IMR-90 (cell line): ENCODE measurements at regions of chr9 and their contacts with region 1.

Region 1: GRCh38 chr9:27033823-27034403 is 28.4 kb upstream of the LRRC19 start:
- DNase-seq: peak; percentile 53
- ATAC-seq: peak; percentile 86
- H3K4me3 ChIP-seq: no peak overlapping the region
- H3K27ac ChIP-seq: no peak overlapping the region
- H3K4me1 ChIP-seq: no peaks in the 10 kb centered on the region
- H3K27me3 ChIP-seq: no peaks in the 10 kb centered on the region
- CTCF ChIP-seq: peak; percentile 84
- POLR2A ChIP-seq: no peak
- RAD21 ChIP-seq: peak; percentile 91

Region 2: GRCh38 chr9:26744191-26744965 is 289.5 kb before region 1 on chr9:
- CTCF ChIA-PET with region 1: no interaction called
- POLR2A ChIA-PET with region 1: no interaction called
- dilution Hi-C with region 1: no loop called
- in situ Hi-C with region 1: no loop called
- intact Hi-C with region 1: loop called (anchors 10 kb)
- DNase-seq: peak; percentile 38
- ATAC-seq: no peak
- H3K4me3 ChIP-seq: no peak overlapping the region
- H3K27ac ChIP-seq: no peak overlapping the region
- H3K4me1 ChIP-seq: no peaks in the 10 kb centered on the region
- H3K27me3 ChIP-seq: no peaks in the 10 kb centered on the region; the same call in 1 of the 2 replicates
- CTCF ChIP-seq: peak; percentile 70
- POLR2A ChIP-seq: no peak
- RAD21 ChIP-seq: peak; percentile 54

Region 3: DNA sequence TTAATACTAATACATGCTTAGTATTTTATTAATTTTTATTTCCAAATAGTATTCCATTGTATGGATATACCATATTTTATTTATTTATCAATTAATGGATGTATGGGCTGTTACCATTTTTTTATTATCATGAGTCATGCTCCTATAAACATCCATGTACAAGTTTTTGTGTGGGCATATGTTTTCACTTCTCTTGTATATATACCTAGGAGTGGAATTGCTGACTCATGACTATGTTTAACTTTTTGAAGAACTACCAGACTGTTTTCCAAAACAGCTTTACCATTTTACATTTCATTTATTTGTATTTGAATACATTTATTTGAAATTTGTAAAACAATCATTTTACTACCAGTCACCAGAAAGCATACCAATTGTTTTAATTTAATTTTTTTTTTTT is 14.3 kb before region 1 on chr9:
- CTCF ChIA-PET with region 1: interaction called, 6 read pairs
- POLR2A ChIA-PET with region 1: interaction called, 16 read pairs
- dilution Hi-C with region 1: no loop called
- in situ Hi-C with region 1: no loop called
- intact Hi-C with region 1: no loop called
- DNase-seq: peak; percentile 87
- ATAC-seq: peak; percentile 85
- H3K4me3 ChIP-seq: no peak overlapping the region
- H3K27ac ChIP-seq: no peak overlapping the region; the same call in 1 of the 2 replicates
- H3K4me1 ChIP-seq: no peaks in the 10 kb centered on the region
- H3K27me3 ChIP-seq: no peaks in the 10 kb centered on the region
- CTCF ChIP-seq: no peak
- POLR2A ChIP-seq: no peak
- RAD21 ChIP-seq: no peak

Region 4: GRCh38 chr9:27108981-27109541 is 75.1 kb after region 1 on chr9 and contains the start of gene TEK:
- CTCF ChIA-PET with region 1: no interaction called
- POLR2A ChIA-PET with region 1: interaction called, 5 read pairs
- dilution Hi-C with region 1: no loop called
- in situ Hi-C with region 1: no loop called
- intact Hi-C with region 1: loop called (anchors 1 kb)
- DNase-seq: peak; percentile 44
- ATAC-seq: peak; percentile 57
- H3K4me3 ChIP-seq: peak within 1 kb of the TSS; percentile 55
- H3K27ac ChIP-seq: peak within 1 kb of the TSS; percentile 95
- H3K4me1 ChIP-seq: peaks cover 11% of the 10 kb centered on the region
- H3K27me3 ChIP-seq: no peaks in the 10 kb centered on the region
- CTCF ChIP-seq: no peak
- POLR2A ChIP-seq: no peak
- RAD21 ChIP-seq: no peak
- total RNA-seq, gene TEK: 10.8 and 11.7 TPM in 2 replicates

Region 5: GRCh38 chr9:27154908-27155307 is 121.0 kb after region 1 on chr9:
- CTCF ChIA-PET with region 1: no interaction called
- POLR2A ChIA-PET with region 1: no interaction called
- dilution Hi-C with region 1: no loop called
- in situ Hi-C with region 1: no loop called
- intact Hi-C with region 1: loop called (anchors 5 kb)
- DNase-seq: peak; percentile 95
- ATAC-seq: peak; percentile 84
- H3K4me3 ChIP-seq: no peak overlapping the region
- H3K27ac ChIP-seq: peak overlapping the region; percentile 63
- H3K4me1 ChIP-seq: peaks cover 18% of the 10 kb centered on the region
- H3K27me3 ChIP-seq: no peaks in the 10 kb centered on the region
- CTCF ChIP-seq: no peak
- POLR2A ChIP-seq: no peak
- RAD21 ChIP-seq: no peak

Region 6: GRCh38 chr9:27204578-27204977 is 170.7 kb after region 1 on chr9:
- CTCF ChIA-PET with region 1: no interaction called
- POLR2A ChIA-PET with region 1: no interaction called
- dilution Hi-C with region 1: no loop called
- in situ Hi-C with region 1: no loop called
- intact Hi-C with region 1: loop called (anchors 10 kb)
- DNase-seq: peak; percentile 54
- ATAC-seq: peak; percentile 87
- H3K4me3 ChIP-seq: no peak overlapping the region
- H3K27ac ChIP-seq: no peak overlapping the region
- H3K4me1 ChIP-seq: peaks cover 3% of the 10 kb centered on the region
- H3K27me3 ChIP-seq: no peaks in the 10 kb centered on the region
- CTCF ChIP-seq: no peak
- POLR2A ChIP-seq: no peak
- RAD21 ChIP-seq: no peak

Region 7: GRCh38 chr9:27292659-27293405 is 258.9 kb after region 1 on chr9:
- CTCF ChIA-PET with region 1: no interaction called
- POLR2A ChIA-PET with region 1: no interaction called
- dilution Hi-C with region 1: no loop called
- in situ Hi-C with region 1: no loop called
- intact Hi-C with region 1: no loop called
- DNase-seq: peak; percentile 7
- ATAC-seq: no peak
- H3K4me3 ChIP-seq: no peak overlapping the region
- H3K27ac ChIP-seq: no peak overlapping the region
- H3K4me1 ChIP-seq: no peaks in the 10 kb centered on the region
- H3K27me3 ChIP-seq: peaks cover 9% of the 10 kb centered on the region
- CTCF ChIP-seq: no peak
- POLR2A ChIP-seq: no peak
- RAD21 ChIP-seq: no peak

Region 8: DNA sequence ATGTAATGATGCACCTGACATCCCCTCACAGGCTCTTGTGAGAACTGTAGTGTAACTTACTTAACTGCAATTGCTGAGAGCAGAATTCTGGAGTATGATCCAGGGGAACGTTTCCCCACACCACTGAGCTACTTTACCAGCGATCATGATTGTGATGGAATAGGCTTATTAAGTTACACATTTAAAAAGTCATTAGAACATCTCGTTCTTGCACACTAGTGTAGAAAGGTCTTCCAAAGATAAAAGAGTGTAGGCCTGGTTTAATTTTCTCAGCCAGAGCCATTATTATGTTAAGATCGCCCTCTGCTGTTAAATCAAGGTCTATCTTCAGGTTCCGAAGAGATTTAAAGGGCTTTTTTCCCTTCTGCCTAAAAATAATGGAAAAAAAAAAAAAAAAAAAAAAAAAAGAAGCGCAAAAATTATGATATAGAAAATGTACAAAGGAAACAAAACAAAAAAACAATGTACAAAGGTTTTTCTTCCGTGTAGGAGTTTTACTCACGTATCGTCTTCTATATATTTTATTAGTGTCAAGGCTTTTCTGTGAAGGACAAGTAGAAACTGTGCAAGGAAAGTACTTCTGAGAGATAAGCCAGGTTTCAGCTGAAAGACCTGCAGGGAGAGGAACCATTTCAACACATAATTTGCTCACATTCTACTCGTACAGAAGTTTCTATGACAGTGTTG is 514.3 kb after region 1 on chr9:
- CTCF ChIA-PET with region 1: no interaction called
- POLR2A ChIA-PET with region 1: no interaction called
- dilution Hi-C with region 1: no loop called
- in situ Hi-C with region 1: no loop called
- intact Hi-C with region 1: loop called (anchors 10 kb)
- DNase-seq: peak; percentile 51
- ATAC-seq: peak; percentile 93
- H3K4me3 ChIP-seq: no peak overlapping the region
- H3K27ac ChIP-seq: no peak overlapping the region
- H3K4me1 ChIP-seq: peaks cover 2% of the 10 kb centered on the region; the same call in 1 of the 2 replicates
- H3K27me3 ChIP-seq: no peaks in the 10 kb centered on the region
- CTCF ChIP-seq: peak; percentile 74
- POLR2A ChIP-seq: no peak
- RAD21 ChIP-seq: peak; percentile 75